ENCODE measurements at regions of chr6 and their contacts with region 1.

Region 1: DNA sequence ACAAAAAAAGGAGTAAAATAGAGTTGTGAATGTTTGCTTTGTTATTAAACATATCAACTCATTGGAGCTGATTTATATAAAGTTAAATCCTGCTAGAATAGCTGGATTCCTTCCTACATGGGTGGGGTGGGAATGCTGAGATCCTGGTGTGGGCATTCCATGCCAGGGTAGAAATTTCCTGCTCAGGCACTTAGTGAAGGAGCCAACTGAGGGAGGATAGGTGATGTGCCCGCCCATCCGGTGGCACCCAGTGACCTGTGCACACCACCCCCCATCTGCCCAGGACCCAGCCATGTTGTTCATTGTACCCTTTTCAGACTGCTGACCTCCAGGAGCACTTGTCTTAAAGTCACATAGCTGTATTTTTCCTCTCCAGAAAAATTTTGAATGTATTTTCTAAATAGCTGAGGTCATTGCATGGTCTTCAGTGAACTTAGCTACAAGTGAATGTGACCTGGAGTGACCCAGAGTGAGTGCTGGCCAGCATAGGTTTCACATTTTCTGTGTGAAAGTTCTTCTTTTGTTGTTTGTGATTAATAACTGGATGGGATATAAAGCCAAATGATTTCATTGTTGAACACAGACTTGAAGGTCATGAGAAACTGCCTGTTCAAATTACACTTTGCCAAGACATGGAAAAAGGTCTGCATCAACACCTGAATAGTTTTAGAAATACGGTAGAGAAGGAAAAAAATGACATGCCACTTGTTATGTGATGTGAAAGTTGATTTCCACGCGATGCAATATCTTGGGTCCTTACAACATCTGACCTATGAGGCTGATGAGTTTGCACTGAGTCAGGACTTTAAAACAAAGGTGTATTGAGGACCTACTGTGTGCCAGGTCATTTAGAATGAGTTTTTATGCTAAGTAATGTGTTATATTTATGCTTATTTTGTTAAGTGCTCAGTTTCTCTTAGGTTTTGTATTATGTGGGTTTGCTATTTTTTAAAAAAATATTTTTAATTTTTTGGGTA is 77.2 kb downstream of the UTRN start:
- DNase-seq: no peak
- H3K4me3 ChIP-seq: no peak overlapping the region
- H3K4me3 Mint-ChIP-seq: no peak overlapping the region
- H3K27ac Mint-ChIP-seq: peak overlapping the region; percentile 50
- H3K4me1 ChIP-seq: no peaks in the 10 kb centered on the region; the same call in 1 of the 2 replicates
- H3K4me1 Mint-ChIP-seq: peaks cover 23% of the 10 kb centered on the region
- H3K27me3 ChIP-seq: no peaks in the 10 kb centered on the region
- H3K27me3 Mint-ChIP-seq: no peaks in the 10 kb centered on the region
- CTCF ChIP-seq: no peak

Region 2: GRCh38 chr6:144411332-144412190 is 49.2 kb after region 1 on chr6:
- CTCF ChIA-PET with region 1: no interaction called
- POLR2A ChIA-PET with region 1: no interaction called
- intact Hi-C with region 1: loop called (anchors 1 kb)
- DNase-seq: no peak
- H3K4me3 ChIP-seq: no peak overlapping the region
- H3K4me3 Mint-ChIP-seq: no peak overlapping the region
- H3K27ac Mint-ChIP-seq: no peak overlapping the region
- H3K4me1 ChIP-seq: peaks cover 19% of the 10 kb centered on the region
- H3K4me1 Mint-ChIP-seq: peaks cover 32% of the 10 kb centered on the region
- H3K27me3 ChIP-seq: no peaks in the 10 kb centered on the region
- H3K27me3 Mint-ChIP-seq: no peaks in the 10 kb centered on the region
- CTCF ChIP-seq: no peak